Naive thymus-derived CD8-positive, alpha-beta T cell (primary cell): ENCODE measurements at regions of chr2 and their contacts with region 1.

Region 1: GRCh38 chr2:73926493-73927338 is at the start of gene DGUOK:
- DNase-seq: peak; percentile 86 to 99 (median 98)
- ATAC-seq: peak; percentile 95 to 98
- H3K4me3 Mint-ChIP-seq: peak within 1 kb of the TSS; percentile 79 to 95 (median 92)
- H3K27ac Mint-ChIP-seq: peak within 1 kb of the TSS; percentile 90 to 99 (median 98)
- H3K4me1 Mint-ChIP-seq: peaks cover 26 to 63% (median 55%) of the 10 kb centered on the region in 4 donors
- H3K27me3 Mint-ChIP-seq: no peaks in the 10 kb centered on the region
- polyA plus RNA-seq, gene DGUOK: 207 to 219 (median 215) TPM

Region 2: DNA sequence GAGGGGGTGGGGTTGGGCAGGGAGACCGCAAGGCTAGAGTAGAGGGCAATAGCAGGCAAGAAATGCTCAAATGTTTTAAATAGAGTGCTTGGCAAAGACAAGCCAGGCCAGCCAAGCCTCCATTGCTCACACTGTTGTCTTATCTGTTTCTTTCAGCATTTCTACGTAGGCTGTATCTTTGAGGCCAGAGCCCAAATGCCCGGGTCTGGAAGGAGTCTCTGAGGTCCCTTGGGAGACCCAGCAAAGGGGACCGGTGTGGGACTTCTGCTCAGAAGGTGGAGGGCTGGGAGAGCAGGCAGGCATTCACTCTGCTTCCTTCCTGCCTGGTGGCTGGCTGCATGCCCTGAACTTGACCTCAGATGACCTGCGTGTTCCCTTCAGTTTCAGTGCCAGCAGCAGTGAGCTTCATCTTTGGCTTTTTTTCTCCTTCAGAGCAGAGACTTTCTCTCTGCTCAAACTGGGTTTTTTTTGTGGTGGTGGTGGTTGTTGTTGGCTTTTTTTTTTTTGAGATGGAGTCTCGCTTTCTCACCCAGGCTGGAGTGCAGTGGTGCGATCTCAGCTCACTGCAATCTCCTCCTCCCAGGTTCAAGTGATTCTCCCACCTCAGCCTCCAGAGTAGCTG is 44.2 kb after region 1 on chr2:
- POLR2A ChIA-PET with region 1: interaction called, 12 read pairs
- DNase-seq: peak; percentile 39 to 85 (median 72)
- ATAC-seq: peak; percentile 84 to 88
- H3K4me3 Mint-ChIP-seq: peak overlapping the region; percentile 65 to 90 (median 80)
- H3K27ac Mint-ChIP-seq: peak overlapping the region; percentile 89 to 98 (median 94)
- H3K4me1 Mint-ChIP-seq: peaks cover 36 to 80% (median 77%) of the 10 kb centered on the region in 4 donors
- H3K27me3 Mint-ChIP-seq: no peaks in the 10 kb centered on the region